ENCODE measurements at regions of chr20 and their contacts with region 1.

Region 1: DNA sequence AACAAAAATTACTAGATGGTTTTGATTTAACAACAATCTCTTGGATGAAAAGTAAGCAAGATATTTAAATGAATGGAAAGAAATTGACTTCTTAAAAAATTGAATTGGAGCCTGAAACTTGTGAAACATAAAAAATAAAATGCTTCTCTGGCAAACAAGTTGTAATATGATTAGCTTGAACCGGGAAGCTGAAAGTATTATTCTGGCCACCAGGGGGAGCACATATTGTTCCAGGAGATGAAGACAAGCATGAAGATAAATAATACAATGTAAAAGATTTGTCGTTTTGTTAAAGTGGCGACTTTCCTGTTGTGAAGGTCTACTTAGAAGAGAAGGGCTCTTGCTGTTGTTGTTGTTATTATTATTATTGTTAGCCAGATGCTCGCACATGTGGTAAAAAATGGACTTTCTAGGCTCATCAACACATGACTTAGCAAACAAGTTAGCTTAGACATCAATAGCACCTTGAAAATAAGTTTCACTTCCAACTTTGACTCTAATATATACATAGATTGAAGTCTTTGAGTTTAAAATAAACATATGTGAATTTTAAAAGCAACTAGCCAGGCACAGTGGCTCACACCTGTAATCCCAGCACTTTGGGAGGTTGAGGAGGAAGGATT is 14.2 kb downstream of the PAX1 start:
- DNase-seq: peak; percentile 30

Region 2: DNA sequence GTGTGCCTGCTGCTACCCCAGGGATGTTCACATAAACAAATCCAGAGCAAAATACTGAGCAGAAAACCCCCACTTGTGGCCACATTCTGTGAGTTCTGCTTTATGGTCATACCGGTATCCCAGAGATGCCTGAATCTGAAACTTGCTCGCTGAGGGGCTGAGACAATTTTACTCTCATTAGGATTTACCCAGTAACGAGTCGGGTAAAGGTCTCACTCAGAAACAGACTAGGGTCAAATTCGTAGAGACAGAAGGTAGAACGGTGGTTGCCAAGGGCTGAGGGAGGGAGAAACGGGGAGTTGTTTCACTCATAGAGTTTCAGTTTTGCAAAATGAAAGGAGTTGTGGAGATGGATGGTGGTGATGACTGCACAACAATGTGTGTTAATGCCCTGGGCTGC is 160.4 kb before region 1 on chr20:
- CTCF ChIA-PET with region 1: no interaction called
- POLR2A ChIA-PET with region 1: no interaction called
- DNase-seq: no peak

Region 3: DNA sequence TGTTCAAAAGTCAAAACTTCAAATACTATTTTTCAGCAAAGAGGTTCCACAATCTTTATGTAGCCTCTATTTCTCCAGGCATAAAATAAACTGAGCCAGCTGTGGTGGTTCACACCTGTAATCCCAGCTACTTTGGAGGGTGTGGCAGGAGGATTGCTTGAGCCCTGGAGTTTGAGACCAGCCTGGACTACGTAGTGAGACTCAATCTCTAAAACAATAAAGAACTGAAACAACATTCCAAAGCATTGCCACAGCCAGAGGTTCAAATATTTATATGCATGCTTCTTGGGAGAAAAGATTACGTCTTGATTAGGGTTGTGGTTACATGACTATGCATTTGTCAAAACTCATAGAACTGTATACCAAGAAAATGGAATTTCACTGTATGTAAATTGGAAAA is 42.0 kb before region 1 on chr20:
- CTCF ChIA-PET with region 1: interaction called, 14 read pairs
- POLR2A ChIA-PET with region 1: no interaction called
- DNase-seq: no peak

Region 4: DNA sequence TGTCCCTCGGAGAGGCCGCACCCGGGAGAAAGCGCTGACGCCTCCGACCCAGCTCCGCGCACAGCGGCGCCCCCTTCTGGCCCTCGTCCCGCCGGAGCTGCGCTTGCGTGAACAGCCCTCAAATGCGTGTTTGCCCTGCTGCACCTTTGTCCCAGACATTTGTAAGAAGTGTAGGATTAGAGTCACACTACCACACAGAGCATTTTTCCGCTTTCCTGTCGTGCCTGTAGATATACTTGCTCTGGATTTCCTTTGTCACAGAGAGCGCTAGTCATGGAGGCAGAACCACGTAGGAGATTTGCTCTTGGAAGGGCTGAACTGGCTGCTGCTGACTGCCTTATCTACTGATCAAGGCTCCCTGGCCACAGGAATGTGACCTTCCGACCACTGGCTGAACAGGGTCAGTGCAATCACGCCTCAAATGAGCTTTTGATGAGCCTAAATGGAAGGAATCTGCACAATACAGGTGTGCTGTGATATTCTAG is 48.1 kb after region 1 on chr20:
- CTCF ChIA-PET with region 1: interaction called, 19 read pairs
- POLR2A ChIA-PET with region 1: no interaction called
- DNase-seq: peak; percentile 75

Measured in HEK293T (cell line).